A549 (cell line): ENCODE measurements at regions of chr3 and their contacts with region 1.

Region 1: DNA sequence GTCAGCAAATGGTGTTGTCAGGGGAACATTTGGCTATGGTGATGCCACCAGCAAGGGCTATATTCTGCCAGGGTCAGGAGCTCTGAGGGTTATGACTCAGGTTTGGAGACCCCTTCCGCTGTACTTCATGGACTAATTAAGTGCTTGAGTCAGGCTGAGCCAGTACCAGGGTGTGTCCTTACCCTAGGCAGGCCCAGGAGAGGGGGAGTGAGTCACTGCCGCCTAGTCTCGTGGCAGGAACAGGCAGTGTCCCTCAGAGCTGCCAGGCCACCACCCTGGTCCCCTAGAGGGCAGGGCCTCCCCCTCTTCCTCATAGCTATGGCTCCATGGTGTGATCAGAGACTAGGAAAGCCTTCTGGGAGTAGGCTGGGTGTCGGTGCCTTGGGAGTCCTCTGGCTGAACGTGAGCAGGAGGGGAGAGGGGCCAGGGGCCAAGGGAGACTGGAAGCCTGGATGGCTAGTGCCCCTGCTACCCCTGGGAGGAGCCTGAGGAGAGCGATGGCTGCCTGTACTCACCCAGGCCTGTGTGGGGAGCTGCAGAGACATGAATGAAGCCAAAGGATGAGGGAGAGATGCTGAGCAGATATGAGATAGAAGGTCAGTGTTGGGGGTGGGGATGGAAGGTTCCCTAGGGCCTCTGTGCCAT is 10.6 kb downstream of the MAPKAPK3 start:
- DNase-seq: peak; percentile 40 to 56
- ATAC-seq: peak; percentile 94 to 95
- H3K4me3 ChIP-seq: no peak overlapping the region
- H3K27ac ChIP-seq: peak overlapping the region; percentile 41 to 78; a peak in 5 of 6 replicates
- H3K4me1 ChIP-seq: peaks cover 19% of the 10 kb centered on the region
- CTCF ChIP-seq: peak; percentile 32; the same call in 2 of the 3 replicates
- EP300 ChIP-seq: no peak
- POLR2A ChIP-seq: no peak
- RAD21 ChIP-seq: peak; percentile 56 to 59

Region 2: DNA sequence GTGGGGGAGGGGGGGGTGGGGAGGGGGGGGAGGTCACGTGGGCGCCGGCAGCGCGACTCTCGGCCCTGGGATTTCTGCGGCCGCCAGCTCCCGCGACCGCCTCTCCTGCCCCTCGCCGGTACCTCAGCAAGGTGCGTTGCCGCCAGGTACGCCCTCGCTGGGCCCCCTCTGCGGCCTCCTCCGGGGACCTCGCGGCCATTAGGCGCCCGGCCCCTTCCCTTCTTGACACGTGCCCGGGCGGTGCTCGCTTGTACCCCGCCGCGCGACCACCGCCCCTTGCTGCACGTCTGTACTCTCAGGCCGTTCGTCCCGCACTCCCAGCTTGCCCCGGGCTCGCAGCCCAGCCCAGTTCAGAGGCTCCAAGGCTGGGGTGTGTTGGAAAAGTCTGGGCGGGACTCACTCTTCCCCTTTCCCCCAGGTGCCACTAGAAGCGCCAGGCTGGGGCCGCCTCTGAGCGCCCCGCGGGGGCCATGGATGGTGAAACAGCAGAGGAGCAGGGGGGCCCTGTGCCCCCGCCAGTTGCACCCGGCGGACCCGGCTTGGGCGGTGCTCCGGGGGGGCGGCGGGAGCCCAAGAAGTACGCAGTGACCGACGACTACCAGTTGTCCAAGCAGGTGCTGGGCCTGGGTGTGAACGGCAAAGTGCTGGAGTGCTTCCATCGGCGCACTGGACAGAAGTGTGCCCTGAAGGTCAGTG is 10.3 kb before region 1 on chr3 and contains the start of gene MAPKAPK3:
- CTCF ChIA-PET with region 1: interaction called, 24 read pairs
- POLR2A ChIA-PET with region 1: no interaction called
- DNase-seq: no peak
- ATAC-seq: peak; percentile 5 to 41; a peak in 3 of 6 replicates
- H3K4me3 ChIP-seq: peak within 1 kb of the TSS; percentile 90
- H3K27ac ChIP-seq: peak within 1 kb of the TSS; percentile 91 to 95
- H3K4me1 ChIP-seq: peaks cover 6% of the 10 kb centered on the region; the same call in 1 of the 3 replicates
- CTCF ChIP-seq: no peak
- EP300 ChIP-seq: no peak
- POLR2A ChIP-seq: no peak
- RAD21 ChIP-seq: no peak
- polyA plus RNA-seq, gene MAPKAPK3: 16.5 and 22.8 TPM in 2 replicates

Region 3: GRCh38 chr3:50652709-50653108 is 25.2 kb after region 1 on chr3:
- CTCF ChIA-PET with region 1: interaction called, 11 read pairs
- POLR2A ChIA-PET with region 1: no interaction called
- DNase-seq: peak; percentile 16 to 18
- ATAC-seq: peak in 1 of 2 experiments; percentile 73; a peak in 3 of 6 replicates
- H3K4me3 ChIP-seq: no peak overlapping the region
- H3K27ac ChIP-seq: no peak overlapping the region
- H3K4me1 ChIP-seq: no peaks in the 10 kb centered on the region
- CTCF ChIP-seq: peak; percentile 24; the same call in 1 of the 3 replicates
- EP300 ChIP-seq: no peak
- POLR2A ChIP-seq: no peak
- RAD21 ChIP-seq: peak; percentile 32 to 48; a peak in 4 of 5 replicates